ENCODE measurements at regions of chr22 and their contacts with region 1.

Region 1: GRCh38 chr22:23767673-23768548 is at the start of gene CHCHD10:
- DNase-seq: peak; percentile 81
- ATAC-seq: peak; percentile 66
- H3K4me3 Mint-ChIP-seq: peak within 1 kb of the TSS; percentile 86
- H3K27ac Mint-ChIP-seq: peak within 1 kb of the TSS; percentile 73
- H3K4me1 Mint-ChIP-seq: peaks cover 74% of the 10 kb centered on the region
- H3K27me3 Mint-ChIP-seq: no peaks in the 10 kb centered on the region
- CTCF ChIP-seq: no peak
- total RNA-seq, gene CHCHD10: 63.4 and 68.8 TPM in 2 replicates

Region 2: GRCh38 chr22:23539135-23539838 is 228.6 kb before region 1 on chr22:
- CTCF ChIA-PET with region 1: no interaction called
- POLR2A ChIA-PET with region 1: no interaction called
- intact Hi-C with region 1: loop called (anchors 5 kb)
- DNase-seq: peak; percentile 50
- ATAC-seq: peak; percentile 100
- H3K4me3 Mint-ChIP-seq: peak overlapping the region; percentile 30
- H3K27ac Mint-ChIP-seq: no peak overlapping the region
- H3K4me1 Mint-ChIP-seq: peaks cover 24% of the 10 kb centered on the region
- H3K27me3 Mint-ChIP-seq: no peaks in the 10 kb centered on the region
- CTCF ChIP-seq: peak; percentile 40

Region 3: GRCh38 chr22:23696326-23696851 is 71.5 kb before region 1 on chr22:
- CTCF ChIA-PET with region 1: interaction called, 4 read pairs
- POLR2A ChIA-PET with region 1: no interaction called
- intact Hi-C with region 1: loop called (anchors 1 kb)
- DNase-seq: peak; percentile 52
- ATAC-seq: peak; percentile 99
- H3K4me3 Mint-ChIP-seq: peak overlapping the region; percentile 75
- H3K27ac Mint-ChIP-seq: peak overlapping the region; percentile 95
- H3K4me1 Mint-ChIP-seq: peaks cover 27% of the 10 kb centered on the region
- H3K27me3 Mint-ChIP-seq: no peaks in the 10 kb centered on the region
- CTCF ChIP-seq: no peak

Region 4: GRCh38 chr22:23750714-23751440 is 17.0 kb before region 1 on chr22 and contains the start of gene ZNF70:
- CTCF ChIA-PET with region 1: interaction called, 6 read pairs
- POLR2A ChIA-PET with region 1: interaction called, 229 read pairs
- intact Hi-C with region 1: loop called (anchors 1 kb)
- DNase-seq: peak; percentile 90
- ATAC-seq: peak; percentile 58
- H3K4me3 Mint-ChIP-seq: peak within 1 kb of the TSS; percentile 87
- H3K27ac Mint-ChIP-seq: peak within 1 kb of the TSS; percentile 95
- H3K4me1 Mint-ChIP-seq: peaks cover 62% of the 10 kb centered on the region
- H3K27me3 Mint-ChIP-seq: no peaks in the 10 kb centered on the region
- CTCF ChIP-seq: no peak
- total RNA-seq, gene ZNF70: 4.0 and 4.9 TPM in 2 replicates

Region 5: GRCh38 chr22:23800297-23801237 is 32.7 kb after region 1 on chr22:
- CTCF ChIA-PET with region 1: interaction called, 3 read pairs
- POLR2A ChIA-PET with region 1: interaction called, 17 read pairs
- intact Hi-C with region 1: loop called (anchors 2 kb)
- DNase-seq: peak; percentile 68
- ATAC-seq: peak; percentile 77
- H3K4me3 Mint-ChIP-seq: peak overlapping the region; percentile 49
- H3K27ac Mint-ChIP-seq: peak overlapping the region; percentile 97
- H3K4me1 Mint-ChIP-seq: peaks cover 78% of the 10 kb centered on the region
- H3K27me3 Mint-ChIP-seq: no peaks in the 10 kb centered on the region
- CTCF ChIP-seq: no peak

Region 6: DNA sequence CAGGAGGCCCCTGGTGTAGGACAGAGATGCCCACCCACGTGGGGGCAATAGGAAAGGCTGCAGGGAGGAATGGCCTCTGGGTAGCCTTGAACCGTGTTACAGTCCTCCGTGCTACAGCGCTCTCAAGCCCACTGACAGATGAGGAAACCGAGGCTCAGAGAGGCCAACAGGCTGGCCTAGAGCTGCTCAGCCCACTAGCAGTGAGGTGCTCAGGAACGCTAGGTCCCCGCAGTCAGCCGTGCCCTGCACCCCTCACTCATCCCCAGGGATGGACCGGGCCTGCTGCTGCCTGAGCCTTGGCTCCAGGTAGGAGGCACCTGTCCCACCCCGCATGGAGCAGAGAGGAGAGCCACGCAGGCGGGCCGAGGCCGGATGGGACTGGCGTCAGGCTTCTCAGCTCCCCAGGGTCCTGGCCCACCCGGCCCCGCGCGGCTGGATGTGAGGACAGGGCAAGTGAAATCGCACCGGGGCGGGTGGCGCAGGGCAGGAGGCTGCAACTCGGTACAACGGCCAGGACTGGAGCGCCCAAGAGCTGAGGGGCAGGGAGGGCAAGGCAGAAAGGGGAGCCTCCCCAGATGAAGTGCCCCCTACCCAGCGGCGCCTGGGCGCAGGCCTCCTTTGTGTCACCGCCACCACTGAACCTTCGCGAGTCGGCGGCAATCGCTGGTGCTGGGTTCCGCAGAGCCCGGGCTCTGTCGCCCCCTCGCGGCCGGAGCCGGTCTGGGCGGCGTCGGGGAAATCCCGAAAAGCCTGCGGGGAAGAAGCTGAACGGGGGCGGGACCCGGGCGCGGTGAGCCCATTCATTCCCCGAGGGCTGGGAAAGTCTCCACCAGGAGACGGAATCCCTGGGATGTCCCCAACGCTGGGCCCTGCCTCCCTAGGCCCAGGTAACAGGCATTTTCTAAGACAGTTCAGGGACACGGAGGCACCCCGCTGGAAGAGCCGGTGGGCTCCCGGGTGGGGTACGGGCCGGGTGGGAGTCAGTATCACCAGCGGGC is 81.4 kb after region 1 on chr22:
- CTCF ChIA-PET with region 1: interaction called, 33 read pairs
- POLR2A ChIA-PET with region 1: interaction called, 18 read pairs
- intact Hi-C with region 1: no loop called
- DNase-seq: peak; percentile 95
- ATAC-seq: peak; percentile 78
- H3K4me3 Mint-ChIP-seq: peak overlapping the region; percentile 70
- H3K27ac Mint-ChIP-seq: no peak overlapping the region
- H3K4me1 Mint-ChIP-seq: peaks cover 69% of the 10 kb centered on the region
- H3K27me3 Mint-ChIP-seq: no peaks in the 10 kb centered on the region
- CTCF ChIP-seq: peak; percentile 60

Region 7: GRCh38 chr22:23878219-23878618 is 110.3 kb after region 1 on chr22:
- CTCF ChIA-PET with region 1: no interaction called
- POLR2A ChIA-PET with region 1: no interaction called
- intact Hi-C with region 1: no loop called
- DNase-seq: no peak
- ATAC-seq: no peak
- H3K4me3 Mint-ChIP-seq: no peak overlapping the region
- H3K27ac Mint-ChIP-seq: no peak overlapping the region
- H3K4me1 Mint-ChIP-seq: peaks cover 3% of the 10 kb centered on the region
- H3K27me3 Mint-ChIP-seq: no peaks in the 10 kb centered on the region
- CTCF ChIP-seq: no peak

Region 8: GRCh38 chr22:23893943-23894709 is 126.2 kb after region 1 on chr22 and contains the start of gene MIF:
- CTCF ChIA-PET with region 1: interaction called, 8 read pairs
- POLR2A ChIA-PET with region 1: interaction called, 3 read pairs
- intact Hi-C with region 1: loop called (anchors 1 kb)
- DNase-seq: peak; percentile 100
- ATAC-seq: peak; percentile 88
- H3K4me3 Mint-ChIP-seq: peak within 1 kb of the TSS; percentile 96
- H3K27ac Mint-ChIP-seq: peak within 1 kb of the TSS; percentile 96
- H3K4me1 Mint-ChIP-seq: peaks cover 25% of the 10 kb centered on the region
- H3K27me3 Mint-ChIP-seq: no peaks in the 10 kb centered on the region
- CTCF ChIP-seq: peak; percentile 44
- total RNA-seq, gene MIF: 308 and 349 TPM in 2 replicates

Region 9: DNA sequence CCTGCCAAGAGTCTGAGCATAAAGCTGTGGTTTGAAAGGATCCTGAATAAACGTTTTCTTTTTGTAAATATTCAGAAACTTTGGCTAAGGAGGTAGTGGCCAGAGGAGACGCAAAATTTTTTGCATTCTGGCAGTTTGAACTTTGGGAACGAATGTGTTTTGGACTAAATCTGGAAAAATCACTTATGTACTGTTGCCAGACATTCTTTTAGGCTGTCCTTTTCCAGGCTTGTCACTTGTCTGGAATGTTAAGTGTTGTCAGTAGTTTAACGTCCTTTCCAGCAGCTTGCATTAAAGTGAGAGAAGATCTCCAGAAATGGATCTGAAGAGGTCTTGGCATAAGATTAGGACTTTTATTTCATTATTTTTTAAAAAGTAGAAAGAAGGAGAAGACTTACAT is 521.2 kb after region 1 on chr22:
- CTCF ChIA-PET with region 1: no interaction called
- POLR2A ChIA-PET with region 1: no interaction called
- intact Hi-C with region 1: no loop called
- DNase-seq: no peak
- ATAC-seq: no peak
- H3K4me3 Mint-ChIP-seq: no peak overlapping the region
- H3K27ac Mint-ChIP-seq: no peak overlapping the region
- H3K4me1 Mint-ChIP-seq: peaks cover 46% of the 10 kb centered on the region
- H3K27me3 Mint-ChIP-seq: no peaks in the 10 kb centered on the region
- CTCF ChIP-seq: no peak

Measured in activated B cell treated with CpG ODN at 0.5 μM for 24 hours (primary cell).